ENCODE measurements at regions of chr15 and their contacts with region 1.

Region 1: GRCh38 chr15:47987908-47988532 is 132.8 kb upstream of the SLC24A5 start:
- DNase-seq: peak; percentile 38
- ATAC-seq: peak; percentile 99
- H3K4me3 ChIP-seq: no peak overlapping the region
- H3K27ac ChIP-seq: no peak overlapping the region
- H3K4me1 ChIP-seq: no peaks in the 10 kb centered on the region
- H3K27me3 ChIP-seq: no peaks in the 10 kb centered on the region
- CTCF ChIP-seq: peak; percentile 46 to 80 (median 59); a peak in 5 of 6 replicates
- EP300 ChIP-seq: no peak
- POLR2A ChIP-seq: no peak
- RAD21 ChIP-seq: peak; percentile 95

Region 2: GRCh38 chr15:47196057-47196456 is 792.0 kb before region 1 on chr15:
- CTCF ChIA-PET with region 1: interaction called, 63 read pairs
- POLR2A ChIA-PET with region 1: no interaction called
- RAD21 ChIA-PET with region 1: interaction called, 56 read pairs
- SMC1A ChIA-PET with region 1: interaction called, 33 read pairs
- in situ Hi-C with region 1: loop called (anchors 5 kb)
- intact Hi-C with region 1: loop called (anchors 1 kb)
- DNase-seq: peak; percentile 13
- ATAC-seq: peak; percentile 97
- H3K4me3 ChIP-seq: no peak overlapping the region
- H3K27ac ChIP-seq: no peak overlapping the region
- H3K4me1 ChIP-seq: no peaks in the 10 kb centered on the region
- H3K27me3 ChIP-seq: no peaks in the 10 kb centered on the region
- CTCF ChIP-seq: peak; percentile 62 to 87 (median 79)
- EP300 ChIP-seq: no peak
- POLR2A ChIP-seq: no peak
- RAD21 ChIP-seq: peak; percentile 87

Region 3: GRCh38 chr15:47711654-47712053 is 276.4 kb before region 1 on chr15:
- CTCF ChIA-PET with region 1: interaction called, 62 read pairs
- POLR2A ChIA-PET with region 1: no interaction called
- RAD21 ChIA-PET with region 1: interaction called, 19 read pairs
- SMC1A ChIA-PET with region 1: interaction called, 15 read pairs
- in situ Hi-C with region 1: no loop called
- intact Hi-C with region 1: loop called (anchors 1 kb)
- DNase-seq: no peak
- ATAC-seq: no peak
- H3K4me3 ChIP-seq: no peak overlapping the region
- H3K27ac ChIP-seq: no peak overlapping the region
- H3K4me1 ChIP-seq: no peaks in the 10 kb centered on the region
- H3K27me3 ChIP-seq: peaks cover 0 to 1% of the 10 kb centered on the region in 2 experiments; a peak in 2 of 4 replicates
- CTCF ChIP-seq: peak; percentile 27 to 48 (median 42); a peak in 4 of 6 replicates
- EP300 ChIP-seq: no peak
- POLR2A ChIP-seq: no peak
- RAD21 ChIP-seq: peak; percentile 83

Region 4: DNA sequence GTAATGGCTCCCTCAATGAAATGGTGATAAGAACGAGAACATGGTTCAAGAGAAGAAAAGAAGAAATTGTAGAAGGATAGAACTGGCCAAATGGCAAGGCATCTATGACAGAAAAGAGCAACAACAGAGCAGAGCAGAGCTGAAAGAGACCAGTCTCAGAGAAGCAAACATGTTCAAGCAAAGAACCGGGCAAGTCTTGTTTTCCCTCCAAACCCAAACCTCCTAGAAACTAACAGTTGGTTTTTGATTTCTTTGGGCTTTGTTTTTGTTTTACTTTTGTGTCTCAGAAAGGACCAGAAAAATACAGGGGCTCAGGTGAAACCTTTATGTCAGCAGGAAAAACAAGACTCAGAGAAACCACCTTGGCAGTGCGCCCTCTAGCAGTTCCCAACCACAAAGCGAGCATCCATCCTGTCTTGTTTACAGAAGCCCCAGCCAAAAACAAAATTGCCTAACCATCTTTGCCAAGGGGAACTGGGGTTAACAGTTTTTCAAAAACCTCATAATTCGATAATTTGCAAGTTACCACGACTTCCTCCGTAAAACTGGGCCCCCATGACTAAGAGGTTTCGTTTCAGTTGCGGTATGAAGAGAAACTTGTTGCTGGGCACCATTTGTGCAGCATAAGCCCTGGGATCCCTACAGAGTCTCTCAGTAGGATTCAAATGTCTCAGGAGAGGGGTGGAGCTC is 26.5 kb before region 1 on chr15:
- CTCF ChIA-PET with region 1: interaction called, 11 read pairs
- POLR2A ChIA-PET with region 1: no interaction called
- RAD21 ChIA-PET with region 1: interaction called, 4 read pairs
- SMC1A ChIA-PET with region 1: interaction called, 4 read pairs
- in situ Hi-C with region 1: no loop called
- intact Hi-C with region 1: no loop called
- DNase-seq: peak; percentile 80
- ATAC-seq: peak; percentile 95
- H3K4me3 ChIP-seq: peak overlapping the region; percentile 58
- H3K27ac ChIP-seq: peak overlapping the region; percentile 51
- H3K4me1 ChIP-seq: peaks cover 21% of the 10 kb centered on the region
- H3K27me3 ChIP-seq: no peaks in the 10 kb centered on the region
- CTCF ChIP-seq: no peak
- EP300 ChIP-seq: peak; percentile 60 to 63; a peak in 2 of 4 replicates
- POLR2A ChIP-seq: no peak
- RAD21 ChIP-seq: no peak

Region 5: DNA sequence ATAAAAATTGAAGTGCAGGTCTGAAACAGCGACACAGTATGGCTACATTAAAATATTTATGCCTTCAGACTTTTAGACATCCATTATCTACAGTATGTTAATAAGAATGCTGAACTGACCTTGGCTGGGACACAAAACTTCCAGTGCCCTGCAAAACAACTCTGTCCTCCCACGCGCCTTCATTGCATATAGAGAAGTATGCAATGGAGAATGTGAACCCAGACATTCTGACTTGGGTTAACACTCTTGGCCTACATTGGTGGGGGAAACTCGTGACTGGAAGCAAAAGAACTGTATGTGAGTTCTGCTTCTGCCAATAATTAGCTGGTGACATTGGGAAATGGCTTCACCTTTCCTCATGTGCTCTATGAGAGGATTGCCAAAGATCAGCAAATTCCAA is 22.3 kb after region 1 on chr15:
- CTCF ChIA-PET with region 1: no interaction called
- POLR2A ChIA-PET with region 1: no interaction called
- RAD21 ChIA-PET with region 1: no interaction called
- SMC1A ChIA-PET with region 1: no interaction called
- in situ Hi-C with region 1: no loop called
- intact Hi-C with region 1: no loop called
- DNase-seq: no peak
- ATAC-seq: no peak
- H3K4me3 ChIP-seq: no peak overlapping the region
- H3K27ac ChIP-seq: no peak overlapping the region
- H3K4me1 ChIP-seq: no peaks in the 10 kb centered on the region
- H3K27me3 ChIP-seq: no peaks in the 10 kb centered on the region
- CTCF ChIP-seq: no peak
- EP300 ChIP-seq: no peak
- POLR2A ChIP-seq: no peak
- RAD21 ChIP-seq: no peak

Measured in GM12878 (cell line).